H1 (cell line): ENCODE measurements at regions of chr12 and their contacts with region 1.

Region 1: GRCh38 chr12:49331380-49332222 is 5.4 kb downstream of the C1QL4 start:
- DNase-seq: peak in 1 of 2 experiments; percentile 68
- H3K4me3 ChIP-seq: no peak overlapping the region
- H3K27ac ChIP-seq: no peak overlapping the region
- H3K4me1 ChIP-seq: no peaks in the 10 kb centered on the region; a peak in 2 of 7 replicates
- H3K27me3 ChIP-seq: peaks cover 33 to 50% (median 43%) of the 10 kb centered on the region in 4 experiments
- CTCF ChIP-seq: peak; percentile 86 to 89 (median 88)
- EP300 ChIP-seq: no peak
- POLR2A ChIP-seq: no peak
- RAD21 ChIP-seq: peak; percentile 86 to 93

Region 2: DNA sequence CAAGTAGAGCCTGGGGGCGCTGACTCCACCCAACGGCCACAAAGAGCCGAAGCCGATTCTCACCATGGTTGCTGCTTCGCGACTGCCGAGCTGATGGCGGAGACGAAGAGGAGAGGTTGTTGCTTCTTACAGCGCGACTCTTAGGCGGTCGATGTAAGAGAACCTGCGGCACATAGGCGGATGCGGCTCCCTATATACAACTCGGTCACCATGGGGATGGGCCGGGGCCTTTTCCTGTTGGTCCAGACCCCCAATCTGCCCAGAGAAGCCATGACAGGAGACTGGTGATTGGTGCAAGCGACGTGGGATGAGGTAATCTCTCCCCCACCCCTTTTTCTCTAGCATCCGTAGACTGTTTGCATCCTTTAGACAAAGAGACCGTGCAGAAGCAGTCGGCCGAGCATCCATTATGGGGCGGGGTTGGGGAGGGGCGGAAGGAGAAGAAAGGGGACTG is 142.7 kb before region 1 on chr12 and contains the start of gene TUBA1A:
- CTCF ChIA-PET with region 1: no interaction called
- POLR2A ChIA-PET with region 1: no interaction called
- DNase-seq: peak; percentile 89 to 95
- H3K4me3 ChIP-seq: peak within 1 kb of the TSS; percentile 57 to 93 (median 84)
- H3K27ac ChIP-seq: peak within 1 kb of the TSS; percentile 76
- H3K4me1 ChIP-seq: no peaks in the 10 kb centered on the region; a peak in 2 of 7 replicates
- H3K27me3 ChIP-seq: no peaks in the 10 kb centered on the region
- CTCF ChIP-seq: no peak
- EP300 ChIP-seq: no peak
- POLR2A ChIP-seq: peak; percentile 93 to 96
- RAD21 ChIP-seq: no peak
- total RNA-seq, gene TUBA1A: 283 and 290 TPM in 2 replicates

Region 3: DNA sequence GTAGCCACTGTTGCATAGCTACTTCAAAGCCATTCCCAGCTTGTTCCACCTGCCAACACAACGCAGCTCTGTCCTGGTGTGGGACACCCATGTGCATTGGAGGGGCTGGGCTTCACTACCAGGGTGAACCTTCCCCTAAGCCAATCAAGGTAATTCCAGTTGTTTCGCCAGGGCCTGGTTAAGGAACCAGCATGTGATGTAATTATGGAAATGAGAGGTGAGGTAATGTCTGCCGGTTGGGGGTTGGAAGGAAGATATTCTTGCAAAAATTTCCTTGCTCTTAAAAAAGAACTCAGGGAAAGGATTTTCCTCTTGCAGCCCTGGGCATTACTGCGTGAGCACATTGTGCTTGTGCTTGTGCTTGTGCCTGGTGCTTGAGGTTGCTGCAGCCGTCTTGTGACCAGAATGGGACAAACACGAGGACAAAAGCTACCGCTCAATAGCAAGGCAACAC is 51.9 kb before region 1 on chr12:
- CTCF ChIA-PET with region 1: interaction called, 13 read pairs
- POLR2A ChIA-PET with region 1: no interaction called
- DNase-seq: no peak
- H3K4me3 ChIP-seq: no peak overlapping the region
- H3K27ac ChIP-seq: no peak overlapping the region
- H3K4me1 ChIP-seq: peaks cover 0 to 7% (median 5%) of the 10 kb centered on the region in 4 experiments; a peak in 3 of 7 replicates
- H3K27me3 ChIP-seq: no peaks in the 10 kb centered on the region
- CTCF ChIP-seq: no peak
- EP300 ChIP-seq: no peak
- POLR2A ChIP-seq: no peak
- RAD21 ChIP-seq: no peak

Region 4: DNA sequence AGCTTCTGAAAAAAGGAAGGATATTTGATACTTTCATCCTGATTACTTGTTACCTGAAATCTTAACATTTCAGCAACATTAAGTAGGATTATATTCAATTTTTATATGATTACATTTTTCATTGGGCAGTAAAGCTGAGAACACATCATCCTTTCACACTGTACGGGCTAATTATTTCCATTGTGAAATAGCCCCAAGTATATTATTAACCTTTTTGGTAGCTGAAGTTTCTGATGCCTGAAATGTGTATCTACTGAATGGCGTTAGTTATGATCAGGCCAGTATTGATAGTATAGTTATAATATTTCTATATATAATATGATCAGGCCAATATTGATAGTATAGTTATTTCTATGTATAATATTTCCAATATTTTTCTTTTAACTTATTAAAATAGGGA is 45.8 kb after region 1 on chr12:
- CTCF ChIA-PET with region 1: no interaction called
- POLR2A ChIA-PET with region 1: no interaction called
- DNase-seq: no peak
- H3K4me3 ChIP-seq: no peak overlapping the region
- H3K27ac ChIP-seq: no peak overlapping the region
- H3K4me1 ChIP-seq: no peaks in the 10 kb centered on the region
- H3K27me3 ChIP-seq: no peaks in the 10 kb centered on the region
- CTCF ChIP-seq: no peak
- EP300 ChIP-seq: no peak
- POLR2A ChIP-seq: no peak
- RAD21 ChIP-seq: no peak